ENCODE measurements at regions of chr15 and their contacts with region 1.

Region 1: DNA sequence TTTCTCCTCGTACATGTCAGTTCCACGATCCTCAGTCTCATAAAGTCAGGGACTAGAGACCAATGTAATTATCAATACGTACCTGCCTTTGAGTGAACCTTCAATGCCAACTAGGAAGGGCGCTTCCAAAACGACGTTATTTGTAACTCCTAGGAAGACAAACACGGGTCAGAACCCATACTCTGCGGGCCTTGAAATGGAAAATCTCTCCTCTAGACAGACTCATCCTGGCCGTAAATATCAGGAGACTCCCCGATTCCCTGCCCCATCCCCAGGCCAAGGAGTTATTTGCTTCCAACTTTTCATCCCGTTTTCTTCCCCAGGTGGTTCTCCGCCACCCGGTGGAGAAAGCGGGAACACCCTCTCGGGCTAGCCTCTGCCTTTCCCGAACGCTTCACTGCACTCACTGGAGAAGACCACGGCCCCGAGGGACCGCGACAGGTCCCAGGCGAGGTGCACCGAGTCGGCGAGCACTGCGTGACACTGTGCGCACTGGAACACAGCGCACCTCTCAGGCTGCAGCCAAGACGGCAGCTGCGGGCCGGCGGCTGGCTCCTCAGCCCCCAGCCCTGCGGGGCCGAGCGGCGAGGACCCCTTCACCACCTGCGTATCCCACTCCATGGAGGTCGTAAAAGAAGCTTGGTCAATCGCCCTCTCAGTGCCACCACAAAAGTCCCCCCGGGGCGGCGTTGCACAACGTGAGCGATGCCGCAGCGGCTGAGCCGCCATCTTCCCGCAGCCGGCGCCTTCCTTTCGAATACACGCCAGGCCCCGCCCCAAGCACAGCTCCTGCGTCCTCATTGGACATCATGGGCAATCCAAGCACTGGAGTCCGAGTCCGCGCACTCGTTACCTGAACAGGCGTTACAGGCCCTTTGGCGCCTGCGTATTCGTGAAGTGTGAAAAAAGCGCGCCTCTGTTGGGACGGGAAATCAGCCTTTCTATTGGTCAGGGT is at the start of gene OIP5:
- DNase-seq: peak; percentile 93 to 100 (median 96)
- ATAC-seq: peak; percentile 95
- H3K4me3 ChIP-seq: peak within 1 kb of the TSS; percentile 83
- H3K27ac ChIP-seq: peak within 1 kb of the TSS; percentile 94
- H3K4me1 ChIP-seq: peaks cover 3 to 9% of the 10 kb centered on the region in 2 experiments; a peak in 2 of 5 replicates
- H3K27me3 ChIP-seq: no peaks in the 10 kb centered on the region
- CTCF ChIP-seq: peak; percentile 56 to 83 (median 59); a peak in 5 of 6 replicates
- EP300 ChIP-seq: no peak
- POLR2A ChIP-seq: peak; percentile 98
- RAD21 ChIP-seq: peak; percentile 38 to 52
- polyA plus RNA-seq, gene OIP5: 8.3 to 14.5 TPM

Region 2: GRCh38 chr15:41230650-41231533 is 101.2 kb before region 1 on chr15 and contains the starts of genes CHP1 and EXD1:
- CTCF ChIA-PET with region 1: no interaction called
- POLR2A ChIA-PET with region 1: interaction called, 5 read pairs
- in situ Hi-C with region 1: no loop called
- intact Hi-C with region 1: loop called (anchors 2 kb)
- DNase-seq: peak; percentile 98 to 99 (median 99)
- ATAC-seq: peak; percentile 97
- H3K4me3 ChIP-seq: peak within 1 kb of the TSS; percentile 75
- H3K27ac ChIP-seq: peak within 1 kb of the TSS; percentile 93
- H3K4me1 ChIP-seq: peaks cover 20 to 31% of the 10 kb centered on the region in 2 experiments
- H3K27me3 ChIP-seq: no peaks in the 10 kb centered on the region
- CTCF ChIP-seq: peak; percentile 89 to 97 (median 89)
- EP300 ChIP-seq: peak; percentile 36; the same call in 1 of the 2 replicates
- POLR2A ChIP-seq: peak; percentile 83
- RAD21 ChIP-seq: peak in 1 of 2 experiments; percentile 36; a peak in 1 of 4 replicates
- polyA plus RNA-seq, gene CHP1: 75.8 to 83.4 TPM
- polyA plus RNA-seq, gene EXD1: not detected

Region 3: DNA sequence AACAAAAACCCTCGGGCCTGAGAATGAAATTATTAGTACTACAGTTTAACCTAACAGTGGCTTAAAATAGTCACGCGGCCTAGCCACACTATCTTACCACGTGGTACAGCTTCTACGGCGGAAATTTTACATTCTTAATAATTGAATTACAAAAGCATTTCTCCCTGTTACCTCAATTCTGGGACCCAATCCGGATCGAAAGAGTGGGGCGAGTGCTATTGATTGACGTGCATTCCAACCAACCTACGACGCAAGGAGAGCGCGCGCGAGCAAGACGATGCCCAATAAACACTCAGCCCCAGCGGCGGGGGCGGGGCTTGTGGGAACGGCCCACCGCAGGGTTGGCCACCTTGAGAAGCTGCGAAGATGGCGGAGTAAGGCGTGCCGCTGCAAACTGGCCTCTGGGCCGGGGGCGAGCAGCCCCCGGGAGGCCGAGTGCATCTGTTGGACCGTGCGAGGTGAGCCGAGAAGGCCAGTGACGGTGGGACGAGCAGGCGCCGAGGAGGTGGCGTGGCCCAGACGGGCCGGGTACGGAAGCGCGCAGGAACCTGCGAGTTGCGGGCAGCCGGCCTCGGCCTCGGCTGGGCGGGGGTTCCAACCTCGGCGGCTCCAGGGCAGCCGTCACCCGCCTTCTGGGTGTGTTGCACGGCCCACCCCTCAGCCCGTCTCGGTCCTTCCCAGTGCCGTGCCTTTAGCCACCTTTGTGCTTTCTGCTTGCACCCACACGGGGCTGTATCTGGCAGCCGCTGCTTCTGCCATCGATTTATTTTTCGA is 48.3 kb before region 1 on chr15:
- CTCF ChIA-PET with region 1: no interaction called
- POLR2A ChIA-PET with region 1: interaction called, 6 read pairs
- in situ Hi-C with region 1: no loop called
- intact Hi-C with region 1: loop called (anchors 5 kb)
- DNase-seq: peak; percentile 99 to 100 (median 99)
- ATAC-seq: peak; percentile 99
- H3K4me3 ChIP-seq: peak overlapping the region; percentile 87
- H3K27ac ChIP-seq: peak overlapping the region; percentile 98
- H3K4me1 ChIP-seq: peaks cover 8 to 12% of the 10 kb centered on the region in 2 experiments; a peak in 4 of 5 replicates
- H3K27me3 ChIP-seq: no peaks in the 10 kb centered on the region
- CTCF ChIP-seq: no peak
- EP300 ChIP-seq: no peak
- POLR2A ChIP-seq: peak; percentile 97
- RAD21 ChIP-seq: no peak

Region 4: DNA sequence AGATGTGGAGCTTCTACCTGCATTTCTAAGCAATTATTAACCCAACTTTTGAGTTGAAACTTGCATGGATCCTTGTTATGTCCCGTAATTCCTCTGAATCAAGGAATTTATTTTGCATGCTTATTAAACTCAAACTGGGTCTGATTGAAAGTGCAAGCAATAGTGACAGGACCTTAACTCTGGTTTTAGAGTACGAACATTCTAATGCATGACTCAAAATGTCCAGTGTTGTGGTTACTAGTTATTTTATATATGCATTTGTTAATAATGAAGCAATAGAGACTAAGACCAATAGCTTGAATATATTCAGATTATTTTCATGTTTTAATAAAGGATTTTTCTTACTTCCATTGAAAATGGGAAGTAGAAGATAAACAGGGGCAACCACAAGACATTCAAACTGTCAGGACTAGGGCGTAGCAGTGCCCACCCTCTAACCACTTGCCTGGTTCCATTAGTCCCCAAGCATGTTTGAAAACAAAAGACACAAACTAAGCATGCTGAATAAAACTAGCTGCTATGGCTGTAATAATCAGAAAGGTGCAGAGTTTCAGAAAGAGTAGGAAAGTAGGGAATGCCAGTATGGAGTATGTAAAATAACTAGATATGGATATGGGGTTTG is 27.9 kb before region 1 on chr15:
- CTCF ChIA-PET with region 1: no interaction called
- POLR2A ChIA-PET with region 1: interaction called, 10 read pairs
- in situ Hi-C with region 1: no loop called
- intact Hi-C with region 1: no loop called
- DNase-seq: no peak
- ATAC-seq: no peak
- H3K4me3 ChIP-seq: no peak overlapping the region
- H3K27ac ChIP-seq: no peak overlapping the region
- H3K4me1 ChIP-seq: no peaks in the 10 kb centered on the region
- H3K27me3 ChIP-seq: no peaks in the 10 kb centered on the region
- CTCF ChIP-seq: no peak
- EP300 ChIP-seq: no peak
- POLR2A ChIP-seq: no peak
- RAD21 ChIP-seq: no peak

Region 5: DNA sequence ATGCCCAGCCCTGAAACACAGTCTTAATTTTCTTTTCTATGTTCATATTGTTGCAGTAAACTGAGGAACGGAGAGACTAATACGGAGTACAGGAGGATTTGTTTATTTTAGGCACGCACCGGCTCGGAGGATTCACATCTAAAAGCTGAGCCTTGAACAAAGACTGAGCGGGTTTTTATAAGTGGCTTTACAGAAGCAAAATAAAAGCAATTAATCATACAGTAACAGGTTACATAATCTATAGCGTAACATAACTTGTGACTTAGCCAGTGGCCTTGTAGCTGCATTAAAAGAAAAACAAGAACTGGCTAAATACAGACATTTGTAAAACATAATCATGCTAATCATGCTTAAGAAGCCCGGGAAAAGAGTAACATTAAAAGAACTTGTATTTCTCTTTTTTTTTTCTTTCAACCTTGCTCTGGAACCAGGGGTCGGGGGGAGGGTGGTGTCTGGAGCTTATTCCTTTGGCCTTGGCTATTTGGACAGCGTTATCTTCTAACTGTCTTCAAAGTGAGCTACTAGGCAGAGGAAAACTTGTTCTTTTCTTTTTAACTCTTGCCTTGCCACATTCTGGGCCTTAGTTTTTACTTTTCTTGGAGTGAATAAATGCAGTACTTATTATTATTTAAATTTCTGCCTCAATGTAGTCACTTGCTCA is 18.1 kb after region 1 on chr15:
- CTCF ChIA-PET with region 1: no interaction called
- POLR2A ChIA-PET with region 1: interaction called, 12 read pairs
- in situ Hi-C with region 1: no loop called
- intact Hi-C with region 1: no loop called
- DNase-seq: no peak
- ATAC-seq: no peak
- H3K4me3 ChIP-seq: no peak overlapping the region
- H3K27ac ChIP-seq: no peak overlapping the region
- H3K4me1 ChIP-seq: no peaks in the 10 kb centered on the region
- H3K27me3 ChIP-seq: no peaks in the 10 kb centered on the region
- CTCF ChIP-seq: no peak
- EP300 ChIP-seq: no peak
- POLR2A ChIP-seq: no peak
- RAD21 ChIP-seq: no peak

Measured in K562 (cell line).